Activated CD4-positive, alpha-beta T cell treated with anti-CD3 and anti-CD28 coated beads for 36 hours (primary cell): ENCODE measurements at regions of chr1 and their contacts with region 1.

Region 1: DNA sequence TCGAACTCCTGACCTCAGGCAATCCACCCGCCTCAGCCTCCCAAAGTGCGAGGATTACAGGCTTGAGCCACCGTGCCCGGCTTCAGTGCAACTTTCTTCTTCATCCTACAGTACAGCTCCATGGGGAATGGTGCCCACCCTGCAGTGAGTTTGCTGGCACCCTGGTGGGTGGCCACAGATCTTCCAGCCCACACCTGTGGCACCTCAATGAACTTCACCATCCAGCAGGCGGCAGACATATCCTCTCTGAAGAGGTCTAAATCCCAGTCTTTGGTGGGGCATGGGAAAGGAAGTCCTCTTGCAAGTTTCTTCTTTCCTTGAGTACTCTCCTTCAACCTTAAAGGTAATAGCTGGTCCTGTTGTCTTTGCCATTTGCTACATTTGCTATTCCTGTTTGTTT is 18.1 kb upstream of the ZBTB8A start:
- DNase-seq: peak; percentile 7
- ATAC-seq: no peak
- H3K4me3 Mint-ChIP-seq: peak overlapping the region; percentile 64
- H3K27ac Mint-ChIP-seq: no peak overlapping the region
- H3K4me1 Mint-ChIP-seq: peaks cover 6% of the 10 kb centered on the region
- H3K27me3 Mint-ChIP-seq: peaks cover 6% of the 10 kb centered on the region

Region 2: GRCh38 chr1:32538887-32539583 is 17.9 kb after region 1 on chr1 and contains the start of gene ZBTB8A:
- CTCF ChIA-PET with region 1: interaction called, 22 read pairs
- POLR2A ChIA-PET with region 1: interaction called, 6 read pairs
- intact Hi-C with region 1: no loop called
- DNase-seq: peak; percentile 42
- ATAC-seq: no peak
- H3K4me3 Mint-ChIP-seq: peak within 1 kb of the TSS; percentile 69
- H3K27ac Mint-ChIP-seq: peak within 1 kb of the TSS; percentile 15
- H3K4me1 Mint-ChIP-seq: peaks cover 8% of the 10 kb centered on the region
- H3K27me3 Mint-ChIP-seq: peaks cover 67% of the 10 kb centered on the region
- total RNA-seq, gene ZBTB8A: 0.30 to 0.35 TPM

Region 3: DNA sequence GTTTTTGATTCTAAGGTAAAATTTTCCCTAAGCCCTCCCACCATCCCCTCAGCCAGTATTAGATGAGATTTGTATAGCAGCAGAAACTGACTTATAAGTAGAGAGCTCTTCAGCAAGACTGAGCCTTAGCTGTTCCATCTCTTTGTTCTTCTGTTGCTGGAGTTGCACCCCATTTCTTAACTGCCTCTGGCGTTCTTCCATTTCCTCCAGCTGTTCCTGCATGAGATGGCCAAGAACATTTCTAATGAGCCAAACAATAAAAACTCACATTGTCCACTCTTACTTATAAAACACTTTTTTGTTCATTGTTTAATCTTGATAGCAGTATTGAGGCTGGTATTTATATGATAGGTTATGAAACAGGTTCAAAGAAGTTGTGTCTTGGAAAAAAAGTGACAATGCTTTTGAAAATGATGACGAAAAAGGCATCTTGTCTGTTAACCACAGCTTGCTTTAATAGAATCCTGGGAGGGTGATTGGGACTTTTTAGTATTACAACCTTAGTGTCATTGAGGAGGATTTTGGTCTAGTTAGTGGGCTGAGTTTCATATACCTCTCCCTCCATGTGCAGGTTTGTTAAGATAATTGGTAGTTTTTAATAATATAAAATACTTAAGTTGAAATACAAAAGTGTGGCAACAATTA is 163.1 kb after region 1 on chr1:
- CTCF ChIA-PET with region 1: interaction called, 3 read pairs
- POLR2A ChIA-PET with region 1: no interaction called
- intact Hi-C with region 1: loop called in 1 of 2 experiments (anchors 10 kb)
- DNase-seq: no peak
- ATAC-seq: peak; percentile 34
- H3K4me3 Mint-ChIP-seq: no peak overlapping the region
- H3K27ac Mint-ChIP-seq: peak overlapping the region; percentile 82
- H3K4me1 Mint-ChIP-seq: peaks cover 13% of the 10 kb centered on the region
- H3K27me3 Mint-ChIP-seq: no peaks in the 10 kb centered on the region

Region 4: GRCh38 chr1:32741413-32742198 is 220.4 kb after region 1 on chr1:
- CTCF ChIA-PET with region 1: no interaction called
- POLR2A ChIA-PET with region 1: no interaction called
- intact Hi-C with region 1: no loop called
- DNase-seq: no peak
- ATAC-seq: peak; percentile 33
- H3K4me3 Mint-ChIP-seq: peak overlapping the region; percentile 52
- H3K27ac Mint-ChIP-seq: no peak overlapping the region
- H3K4me1 Mint-ChIP-seq: no peaks in the 10 kb centered on the region
- H3K27me3 Mint-ChIP-seq: peaks cover 17% of the 10 kb centered on the region

Region 5: GRCh38 chr1:32870615-32871363 is 349.6 kb after region 1 on chr1 and contains the start of gene FNDC5:
- CTCF ChIA-PET with region 1: interaction called, 10 read pairs
- POLR2A ChIA-PET with region 1: no interaction called
- intact Hi-C with region 1: loop called (anchors 1 to 2 kb)
- DNase-seq: no peak
- ATAC-seq: no peak
- H3K4me3 Mint-ChIP-seq: no peak within 1 kb of the TSS
- H3K27ac Mint-ChIP-seq: no peak within 1 kb of the TSS
- H3K4me1 Mint-ChIP-seq: no peaks in the 10 kb centered on the region
- H3K27me3 Mint-ChIP-seq: peaks cover 42% of the 10 kb centered on the region
- total RNA-seq, gene FNDC5: not detected